Tibial artery (tissue), 4 donors: ENCODE measurements at regions of chr1 and their contacts with region 1.

Region 1: DNA sequence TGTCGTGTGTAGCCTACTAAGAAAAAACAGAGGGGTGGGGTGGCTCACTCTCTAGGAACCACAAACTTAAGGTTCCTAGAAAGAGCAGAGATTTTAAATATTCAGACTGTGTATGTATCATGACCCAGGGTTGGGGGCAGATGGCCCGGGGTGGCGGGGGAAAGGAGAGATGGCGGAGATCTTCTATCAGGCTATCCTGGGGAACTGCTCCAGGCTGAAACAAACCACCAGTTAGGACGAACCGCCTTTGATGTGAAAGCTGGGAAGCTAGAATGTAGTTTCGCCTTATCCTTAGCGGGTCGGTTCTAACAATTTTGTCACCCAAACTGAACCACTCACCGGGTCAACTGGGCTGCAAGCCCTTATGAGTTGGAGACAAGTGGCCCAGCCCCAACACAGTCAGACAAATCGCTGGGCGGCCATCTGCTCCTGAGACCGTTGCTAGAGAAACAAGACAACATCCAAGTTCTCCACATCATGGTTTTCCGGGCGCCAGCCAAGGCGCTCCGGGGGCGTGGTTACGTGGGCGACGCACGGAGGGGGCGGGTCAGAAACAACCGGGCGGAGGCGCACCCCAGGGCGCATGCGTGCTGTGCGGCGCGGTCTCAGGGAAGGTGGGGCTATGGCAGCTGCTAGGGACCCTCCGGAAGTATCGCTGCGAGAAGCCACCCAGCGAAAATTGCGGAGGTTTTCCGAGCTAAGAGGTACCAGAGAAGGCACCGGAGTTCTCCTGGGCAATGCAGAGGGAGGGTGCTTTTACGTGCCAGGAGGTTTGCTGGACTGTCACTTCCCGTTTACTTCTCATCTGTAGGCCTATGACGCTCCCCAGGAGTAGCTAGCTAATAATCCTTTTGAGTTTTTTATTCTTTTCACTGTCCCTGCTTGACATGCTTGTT is at the starts of genes FPGT and LRRIQ3:
- DNase-seq: peak; percentile 94 to 97
- H3K4me3 ChIP-seq: peak within 1 kb of the TSS; percentile 64 to 70
- H3K27ac ChIP-seq: peak within 1 kb of the TSS; percentile 85 to 88
- H3K4me1 ChIP-seq: peaks cover 0 to 20% (median 0%) of the 10 kb centered on the region in 4 donors
- H3K27me3 ChIP-seq: no peaks in the 10 kb centered on the region
- CTCF ChIP-seq: no peak

Region 2: GRCh38 chr1:74733604-74734484 is 535.9 kb after region 1 on chr1:
- intact Hi-C with region 1: loop called (anchors 10 kb)
- DNase-seq: no peak
- H3K4me3 ChIP-seq: peak overlapping the region; percentile 67 to 74
- H3K27ac ChIP-seq: peak overlapping the region; percentile 84
- H3K4me1 ChIP-seq: peaks cover 0 to 52% (median 34%) of the 10 kb centered on the region in 4 donors
- H3K27me3 ChIP-seq: no peaks in the 10 kb centered on the region
- CTCF ChIP-seq: peak; percentile 53 to 64